ENCODE measurements at regions of chr6 and their contacts with region 1.

Region 1: DNA sequence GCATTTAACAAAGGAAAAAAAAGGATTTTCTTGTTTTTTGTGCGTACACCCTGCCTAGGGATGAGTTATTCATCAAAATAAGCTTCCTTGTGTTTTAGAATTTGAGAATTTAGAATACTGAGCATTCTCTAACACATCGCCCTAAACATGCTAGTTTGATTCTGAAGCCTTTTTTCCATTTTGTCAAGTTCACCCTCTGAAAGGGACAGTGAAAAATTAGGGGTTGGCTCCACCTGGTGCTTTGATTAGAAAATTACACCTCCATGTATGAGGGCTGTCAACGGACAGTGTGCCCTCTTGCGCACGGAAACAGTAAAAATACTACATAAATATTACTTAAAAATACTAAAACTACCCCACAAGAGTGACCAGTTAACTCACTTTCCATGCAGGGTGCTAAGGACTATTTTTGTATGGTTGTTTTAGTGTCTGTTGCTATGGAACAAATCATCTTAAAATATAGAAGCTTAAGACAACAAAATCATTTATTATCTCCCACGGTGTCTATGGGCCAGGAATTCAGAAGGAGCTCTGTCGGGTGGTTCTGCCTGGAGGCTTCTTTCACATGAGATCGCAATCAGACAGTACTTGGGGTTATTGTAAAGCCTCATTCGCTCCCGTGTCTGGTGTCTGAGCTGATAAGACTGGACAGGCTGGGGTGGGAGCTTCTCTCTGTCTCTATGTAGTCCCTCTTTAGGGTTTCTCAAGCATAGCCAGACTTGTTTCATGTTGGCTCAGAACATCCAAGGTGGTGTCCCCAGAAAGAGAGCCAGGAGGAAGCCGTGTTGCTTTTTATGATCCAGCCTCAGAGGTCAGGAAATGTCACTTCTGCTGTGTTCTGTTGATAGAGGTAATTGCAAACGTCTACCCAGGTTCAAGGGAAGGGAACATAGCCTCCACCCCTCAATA is 41.1 kb upstream of the TMEM170B start:
- DNase-seq: peak; percentile 93
- H3K4me3 Mint-ChIP-seq: no peak overlapping the region
- H3K27ac Mint-ChIP-seq: no peak overlapping the region
- H3K4me1 Mint-ChIP-seq: peaks cover 10% of the 10 kb centered on the region
- H3K27me3 Mint-ChIP-seq: no peaks in the 10 kb centered on the region

Region 2: DNA sequence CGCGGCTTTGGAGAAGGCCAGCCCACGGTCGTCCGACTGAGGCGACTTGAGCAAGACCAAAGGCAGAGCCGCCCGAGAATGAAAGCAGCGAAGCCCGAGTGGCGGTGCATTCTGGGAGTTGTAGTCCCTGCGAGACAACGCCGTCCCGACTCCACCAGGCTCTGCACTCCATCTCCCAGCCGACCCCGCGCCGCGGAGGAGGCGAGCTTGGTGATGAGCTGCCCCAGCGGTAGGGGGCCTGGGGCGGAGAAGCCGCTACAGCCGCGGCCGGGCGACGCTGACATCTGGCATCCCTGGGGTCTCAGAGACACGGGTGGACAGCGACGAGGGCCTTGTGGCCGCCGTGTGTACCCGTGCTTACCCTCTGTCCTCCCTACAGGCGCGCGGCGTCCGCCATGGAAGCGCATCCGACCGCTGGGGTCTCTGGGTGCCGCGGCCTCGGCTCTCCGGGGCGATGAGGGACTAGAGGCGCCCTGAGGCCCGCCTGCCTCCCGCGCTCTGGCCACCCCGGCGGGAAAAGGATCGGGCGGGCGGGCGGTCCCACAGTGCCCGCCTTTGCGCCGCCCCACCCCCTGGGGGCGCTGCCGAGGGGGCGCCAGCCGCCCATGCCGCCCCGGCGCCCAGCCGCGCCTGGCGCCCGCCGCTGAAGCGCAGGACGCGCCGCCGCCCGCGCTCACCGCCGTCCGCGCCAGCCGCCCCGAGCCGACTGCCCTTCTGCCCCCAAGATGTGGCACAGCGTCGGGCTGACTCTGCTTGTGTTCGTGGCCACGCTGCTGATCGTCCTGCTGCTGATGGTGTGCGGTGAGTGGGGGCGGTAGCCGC is 402.6 kb before region 1 on chr6 and contains the start of gene SMIM13:
- intact Hi-C with region 1: loop called (anchors 1 kb)
- DNase-seq: peak; percentile 99
- H3K4me3 Mint-ChIP-seq: peak within 1 kb of the TSS; percentile 92
- H3K27ac Mint-ChIP-seq: peak within 1 kb of the TSS; percentile 95
- H3K4me1 Mint-ChIP-seq: peaks cover 26% of the 10 kb centered on the region
- H3K27me3 Mint-ChIP-seq: peaks cover 2% of the 10 kb centered on the region
- total RNA-seq, gene SMIM13: 15.2 and 15.6 TPM in 2 replicates

Region 3: DNA sequence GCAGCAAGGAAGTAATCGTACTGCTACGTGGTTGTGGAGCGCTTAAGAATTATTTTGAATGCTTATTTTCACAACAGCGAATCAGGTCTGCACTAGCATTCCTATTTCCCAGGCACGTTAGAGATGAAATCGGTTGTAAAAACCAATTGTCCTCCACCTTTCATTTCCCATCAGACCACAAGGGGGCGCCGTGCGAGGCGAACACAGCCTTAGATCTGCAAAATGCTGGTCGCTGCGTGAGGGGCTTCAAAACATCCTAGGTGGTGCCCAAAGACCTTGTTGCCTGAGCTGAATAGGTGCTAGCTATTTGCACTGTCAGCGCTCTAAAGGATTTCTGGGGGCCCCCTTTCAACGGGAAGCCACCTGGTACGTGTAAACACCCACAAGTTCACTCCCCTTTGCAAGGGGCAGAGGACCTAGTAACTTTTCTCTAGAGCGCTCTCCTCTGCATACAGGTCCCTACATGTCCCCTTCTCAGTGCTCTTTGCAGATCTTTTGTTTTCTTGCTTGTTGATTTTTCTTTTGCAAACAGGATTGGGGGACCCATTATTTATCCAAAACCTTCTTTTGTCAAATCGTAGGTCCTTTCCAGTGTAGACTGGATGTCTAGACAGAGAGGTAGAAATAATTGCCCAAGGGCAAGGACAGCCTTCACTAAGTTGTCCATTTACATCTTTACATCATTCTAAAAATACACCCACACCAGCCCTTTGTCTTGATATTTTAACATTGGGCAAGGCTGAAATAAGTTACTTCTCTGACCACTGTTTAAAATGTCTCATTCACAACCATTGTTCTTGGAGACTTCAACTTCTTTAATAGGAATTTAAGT is 323.7 kb before region 1 on chr6:
- intact Hi-C with region 1: loop called (anchors 1 kb)
- DNase-seq: peak; percentile 92
- H3K4me3 Mint-ChIP-seq: peak overlapping the region; percentile 32
- H3K27ac Mint-ChIP-seq: peak overlapping the region; percentile 21
- H3K4me1 Mint-ChIP-seq: peaks cover 21% of the 10 kb centered on the region
- H3K27me3 Mint-ChIP-seq: no peaks in the 10 kb centered on the region

Region 4: DNA sequence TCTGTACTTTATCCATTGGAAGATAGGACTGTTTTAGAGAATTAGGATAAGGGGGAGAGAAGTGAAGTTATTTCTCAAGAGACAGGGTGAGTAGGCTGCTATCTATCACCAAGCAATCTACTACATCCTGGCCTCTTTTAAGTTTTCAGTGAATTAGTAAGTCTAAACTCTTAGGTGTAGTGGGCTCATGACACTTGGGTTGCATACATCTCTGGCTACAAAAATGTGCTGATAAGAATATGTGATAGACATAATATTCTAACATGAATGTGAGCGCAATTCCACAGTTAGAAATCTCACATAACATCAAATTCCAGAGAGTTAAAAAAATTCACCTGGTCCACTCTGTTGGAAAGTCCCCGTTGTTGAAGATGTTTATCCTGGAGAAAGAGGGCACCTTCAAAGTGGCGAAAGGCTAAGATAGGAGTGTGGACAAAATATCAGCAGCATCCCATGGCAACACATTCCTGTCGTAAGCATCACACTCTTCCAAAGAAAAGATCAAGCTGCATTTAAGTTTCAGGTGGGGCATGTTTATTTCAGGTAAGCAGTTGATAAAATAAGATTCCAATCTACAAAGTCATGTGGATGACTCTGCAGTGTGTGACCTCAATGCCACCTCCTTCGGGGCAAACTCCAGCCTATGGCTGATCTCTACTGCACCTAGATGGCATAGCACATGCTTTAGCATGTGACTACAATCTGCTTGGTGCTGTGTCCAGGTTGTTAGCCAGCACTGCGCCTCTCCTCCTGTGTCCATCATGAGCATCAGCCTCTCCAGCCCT is 152.3 kb before region 1 on chr6:
- intact Hi-C with region 1: loop called (anchors 1 kb)
- DNase-seq: no peak
- H3K4me3 Mint-ChIP-seq: peak overlapping the region; percentile 2
- H3K27ac Mint-ChIP-seq: peak overlapping the region; percentile 70
- H3K4me1 Mint-ChIP-seq: peaks cover 81% of the 10 kb centered on the region
- H3K27me3 Mint-ChIP-seq: no peaks in the 10 kb centered on the region

Region 5: GRCh38 chr6:11423072-11423471 is 73.3 kb before region 1 on chr6:
- intact Hi-C with region 1: loop called (anchors 1 kb)
- DNase-seq: peak; percentile 54
- H3K4me3 Mint-ChIP-seq: peak overlapping the region; percentile 58
- H3K27ac Mint-ChIP-seq: peak overlapping the region; percentile 86
- H3K4me1 Mint-ChIP-seq: peaks cover 43% of the 10 kb centered on the region
- H3K27me3 Mint-ChIP-seq: no peaks in the 10 kb centered on the region

Region 6: GRCh38 chr6:11575408-11576033 is 79.1 kb after region 1 on chr6:
- intact Hi-C with region 1: loop called (anchors 2 kb)
- DNase-seq: peak; percentile 85
- H3K4me3 Mint-ChIP-seq: no peak overlapping the region
- H3K27ac Mint-ChIP-seq: no peak overlapping the region
- H3K4me1 Mint-ChIP-seq: no peaks in the 10 kb centered on the region
- H3K27me3 Mint-ChIP-seq: no peaks in the 10 kb centered on the region